Head of caudate nucleus (tissue), 42 donors: ENCODE measurements at regions of chr13 and their contacts with region 1.

Region 1: GRCh38 chr13:48775804-48776203 is 122.1 kb downstream of the CYSLTR2 start:
- DNase-seq: no peak

Region 2: DNA sequence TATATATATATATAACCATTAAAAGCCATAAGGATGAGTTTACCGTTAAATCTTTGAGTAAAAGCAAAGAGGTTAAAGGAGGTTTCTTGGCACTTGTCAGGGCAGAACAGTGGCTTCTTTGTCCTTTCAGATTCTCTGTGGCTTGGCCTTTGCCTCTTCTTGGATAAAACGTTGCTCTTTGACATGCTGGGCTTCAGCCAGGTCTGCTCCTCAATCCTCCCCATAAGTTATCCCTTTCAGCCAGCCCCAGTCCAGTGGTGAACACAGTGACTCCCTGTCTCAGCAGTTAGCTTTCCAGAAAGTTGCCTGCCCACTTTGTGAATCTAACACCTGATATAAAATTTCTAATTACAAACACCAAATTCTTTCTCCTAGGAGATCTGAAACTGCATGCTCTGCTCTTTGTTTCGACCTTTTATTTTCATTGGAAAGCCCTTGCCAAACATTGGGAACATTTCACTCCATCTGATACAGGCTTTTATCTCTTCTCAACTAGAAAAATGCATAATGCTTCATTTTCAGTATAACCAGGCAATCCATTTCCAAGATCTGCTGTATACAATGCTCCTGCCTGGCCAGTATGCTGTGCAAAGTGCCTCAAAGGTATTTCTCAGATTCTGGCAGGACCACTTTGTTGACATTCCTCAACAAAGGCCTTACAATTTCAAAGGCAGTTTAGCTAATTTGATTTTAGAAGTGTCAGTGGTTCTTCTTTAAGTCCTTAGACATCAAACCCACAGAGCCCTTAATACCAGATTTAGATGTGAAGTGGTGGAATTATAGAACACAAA is 664.7 kb before region 1 on chr13:
- intact Hi-C with region 1: loop called (anchors 10 kb)
- DNase-seq: peak in 26 of 42 donors; percentile 4 to 59 (median 36)

Region 3: DNA sequence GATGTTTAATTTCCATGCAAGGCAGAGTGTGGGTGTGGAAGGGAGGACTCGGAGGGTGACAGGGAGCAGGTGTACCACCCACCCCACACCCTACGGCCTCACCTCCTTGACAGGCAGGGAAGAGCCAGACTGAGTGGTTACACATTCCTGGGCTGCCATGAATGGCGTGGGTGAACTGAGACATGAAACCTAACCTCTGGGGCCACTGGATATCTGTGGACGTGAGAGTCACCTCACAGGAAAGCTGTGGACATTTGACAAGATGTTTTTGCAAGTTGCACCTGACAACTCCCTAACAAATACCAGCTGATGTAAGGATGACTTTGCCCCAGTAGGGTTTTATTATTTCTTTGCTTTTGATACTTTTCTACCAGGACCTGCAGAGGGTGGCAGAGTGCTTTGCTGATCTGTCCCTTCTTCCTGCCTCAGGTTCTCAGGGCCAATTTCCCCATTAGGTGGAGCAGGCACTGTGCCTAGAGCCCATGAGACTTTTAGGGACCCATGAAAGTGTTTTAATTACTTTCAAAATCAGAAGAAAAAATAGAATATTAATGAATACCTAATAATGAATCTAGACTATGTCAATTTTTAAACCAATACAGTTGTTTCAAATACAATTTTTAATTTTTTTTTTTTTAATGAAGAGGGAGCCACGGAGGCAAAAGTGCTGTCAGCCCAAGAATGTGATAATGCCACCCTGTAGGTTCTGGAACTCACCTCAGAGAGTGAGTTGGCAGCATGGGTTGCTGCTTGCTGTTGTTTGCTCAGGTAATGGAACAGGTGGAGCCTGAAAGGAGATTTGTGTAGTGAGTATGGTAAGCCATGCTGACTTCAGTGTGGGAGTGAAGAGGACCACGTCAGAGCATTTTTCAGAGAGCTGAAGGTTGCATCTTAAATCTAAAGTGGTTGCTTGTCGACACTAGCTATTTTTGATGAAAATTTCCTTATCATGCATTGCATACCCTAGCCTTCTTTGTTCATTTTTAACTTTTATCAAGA is 180.1 kb before region 1 on chr13:
- intact Hi-C with region 1: loop called (anchors 5 kb)
- DNase-seq: peak; percentile 14 to 85 (median 64)

Region 4: DNA sequence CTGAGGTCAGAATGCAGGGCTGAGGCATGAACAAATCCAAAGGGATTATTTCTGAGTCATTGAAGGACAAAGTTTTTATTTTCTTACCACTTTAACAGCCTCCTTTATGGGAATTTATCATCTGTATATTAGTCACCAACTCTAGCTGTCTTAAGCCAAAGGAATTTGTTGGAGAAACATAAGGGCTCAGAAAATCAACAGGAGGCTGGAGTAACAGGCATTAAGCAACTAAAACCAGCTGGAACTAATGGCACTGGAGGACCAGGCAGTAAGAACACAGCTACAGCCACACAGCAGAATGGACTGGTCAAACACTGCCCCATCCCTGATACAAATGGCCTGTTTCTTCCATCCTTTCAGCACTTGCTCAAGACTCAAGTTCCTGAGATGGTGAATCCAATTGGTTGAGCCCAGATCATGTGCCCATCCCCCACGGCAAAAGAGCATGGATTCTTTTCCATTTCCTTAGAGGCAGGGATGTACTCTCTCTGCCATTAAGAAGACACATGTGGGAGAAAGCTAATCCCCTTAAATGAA is 42.8 kb after region 1 on chr13:
- intact Hi-C with region 1: no loop called
- DNase-seq: no peak